Lower leg skin (tissue), 4 donors: ENCODE measurements at regions of chr16 and their contacts with region 1.

Region 1: DNA sequence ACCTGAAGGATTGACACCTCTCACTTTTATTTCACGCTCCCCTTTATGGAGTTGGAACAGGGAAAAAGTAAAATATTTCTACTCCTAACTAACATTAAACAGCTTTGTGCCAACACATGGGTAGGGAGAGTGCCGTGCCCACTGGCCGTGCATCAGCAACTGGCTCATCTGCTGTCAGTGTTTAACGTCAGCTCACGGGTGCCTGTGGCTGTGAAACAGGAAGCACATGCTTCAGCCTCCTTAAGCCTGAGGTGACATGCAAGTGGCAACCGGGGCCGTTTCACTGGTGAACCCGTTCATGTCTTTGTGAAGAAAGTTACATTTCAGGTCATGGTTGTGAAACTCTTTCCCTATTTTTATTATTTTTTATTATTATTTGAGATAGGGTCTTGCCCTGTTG is 3.2 kb downstream of the SPG7 start:
- DNase-seq: no peak
- H3K4me3 ChIP-seq: no peak overlapping the region
- CTCF ChIP-seq: no peak
- POLR2A ChIP-seq: no peak

Region 2: GRCh38 chr16:87702325-87702811 is 1809.0 kb before region 1 on chr16:
- intact Hi-C with region 1: no loop called
- DNase-seq: no peak
- H3K4me3 ChIP-seq: no peak overlapping the region
- CTCF ChIP-seq: no peak
- POLR2A ChIP-seq: no peak

Region 3: GRCh38 chr16:89330177-89330856 is 181.1 kb before region 1 on chr16:
- intact Hi-C with region 1: loop called (anchors 10 kb)
- DNase-seq: no peak
- H3K4me3 ChIP-seq: no peak overlapping the region
- CTCF ChIP-seq: no peak
- POLR2A ChIP-seq: no peak